Activated CD4-positive, alpha-beta T cell treated with anti-CD3 and anti-CD28 coated beads, Interleukin-2, amount 10 ng/mL, durations not matched to agents 24 days and 14 days (primary cell): ENCODE measurements at regions of chr4 and their contacts with region 1.

Region 1: DNA sequence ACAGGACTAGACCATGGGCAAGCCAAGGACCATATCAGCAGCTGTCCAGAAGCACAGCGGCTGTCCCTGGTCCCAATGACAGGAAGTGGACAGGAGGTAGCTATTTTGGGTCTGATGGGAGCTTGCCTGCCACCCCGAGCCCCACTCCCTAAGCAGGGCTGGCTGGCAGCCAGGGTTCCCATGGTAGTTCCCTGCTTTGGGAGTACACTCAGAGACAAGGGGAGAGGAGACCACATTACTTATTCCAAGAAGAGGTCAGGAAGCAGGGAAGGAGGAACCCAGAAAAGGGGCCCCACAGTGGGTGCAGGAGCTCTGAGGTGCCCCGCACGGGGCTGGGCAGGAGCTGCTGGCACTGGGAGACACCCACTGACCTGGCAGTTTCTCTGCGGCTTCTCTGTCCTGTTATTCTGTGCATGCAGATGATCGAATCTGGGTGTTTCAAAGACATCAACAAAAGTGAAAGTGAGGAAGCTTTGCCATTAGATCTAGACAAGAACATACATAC is 36.3 kb downstream of the HTT-AS start:
- DNase-seq: peak; percentile 73
- H3K4me3 Mint-ChIP-seq: peak overlapping the region; percentile 74
- H3K27ac Mint-ChIP-seq: peak overlapping the region; percentile 58
- H3K4me1 Mint-ChIP-seq: peaks cover 37% of the 10 kb centered on the region
- H3K27me3 Mint-ChIP-seq: peaks cover 10% of the 10 kb centered on the region

Region 2: DNA sequence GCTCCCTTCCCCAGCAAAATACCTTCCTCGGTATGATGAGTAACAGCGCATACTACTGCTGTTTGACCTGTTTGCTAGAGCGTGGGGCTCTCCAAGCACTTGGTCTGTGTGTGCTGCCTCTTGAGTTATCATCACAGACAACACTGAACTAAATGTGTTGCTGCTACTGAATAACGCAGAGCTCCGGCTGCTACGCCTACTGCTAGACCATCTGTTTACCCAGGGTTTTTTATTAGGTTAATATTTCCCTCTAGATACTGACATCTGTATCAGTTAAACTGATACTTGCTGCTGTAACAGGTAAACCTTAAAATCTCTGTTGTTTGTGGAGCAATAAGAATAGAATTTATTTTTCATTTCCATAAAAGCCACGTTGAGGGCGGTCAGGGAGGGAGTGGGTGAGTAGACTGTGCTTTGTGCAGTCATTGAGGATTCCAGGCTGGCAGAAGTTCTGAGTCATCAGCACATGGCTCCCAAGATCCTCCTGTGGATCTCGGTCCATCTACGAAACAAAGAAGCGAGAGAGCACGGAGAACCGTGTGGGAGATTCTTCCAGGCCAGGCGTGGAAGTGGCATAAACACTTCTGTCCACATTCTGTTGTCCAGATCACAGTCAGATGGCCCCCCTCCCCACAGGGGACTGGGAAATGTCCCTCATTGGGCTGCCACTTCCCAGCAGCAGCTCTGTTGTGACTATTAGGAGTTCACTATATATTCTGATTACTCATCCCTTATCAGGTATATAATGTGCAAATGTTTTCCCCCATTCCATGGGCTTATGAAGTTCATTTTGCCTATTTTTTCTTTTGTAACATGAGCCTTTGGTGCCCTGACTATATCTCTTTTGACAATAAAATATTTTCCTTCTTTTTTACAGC is 60.6 kb before region 1 on chr4:
- intact Hi-C with region 1: loop called (anchors 1 kb)
- DNase-seq: no peak
- H3K4me3 Mint-ChIP-seq: no peak overlapping the region
- H3K27ac Mint-ChIP-seq: no peak overlapping the region
- H3K4me1 Mint-ChIP-seq: peaks cover 3% of the 10 kb centered on the region
- H3K27me3 Mint-ChIP-seq: peaks cover 5% of the 10 kb centered on the region

Region 3: GRCh38 chr4:3009422-3009821 is 28.6 kb before region 1 on chr4:
- intact Hi-C with region 1: loop called (anchors 1 kb)
- DNase-seq: peak; percentile 61
- H3K4me3 Mint-ChIP-seq: no peak overlapping the region
- H3K27ac Mint-ChIP-seq: peak overlapping the region; percentile 19
- H3K4me1 Mint-ChIP-seq: peaks cover 19% of the 10 kb centered on the region
- H3K27me3 Mint-ChIP-seq: peaks cover 2% of the 10 kb centered on the region